Activated CD8-positive, alpha-beta T cell treated with anti-CD3 and anti-CD28 coated beads for 36 hours (primary cell): ENCODE measurements at regions of chr2 and their contacts with region 1.

Region 1: DNA sequence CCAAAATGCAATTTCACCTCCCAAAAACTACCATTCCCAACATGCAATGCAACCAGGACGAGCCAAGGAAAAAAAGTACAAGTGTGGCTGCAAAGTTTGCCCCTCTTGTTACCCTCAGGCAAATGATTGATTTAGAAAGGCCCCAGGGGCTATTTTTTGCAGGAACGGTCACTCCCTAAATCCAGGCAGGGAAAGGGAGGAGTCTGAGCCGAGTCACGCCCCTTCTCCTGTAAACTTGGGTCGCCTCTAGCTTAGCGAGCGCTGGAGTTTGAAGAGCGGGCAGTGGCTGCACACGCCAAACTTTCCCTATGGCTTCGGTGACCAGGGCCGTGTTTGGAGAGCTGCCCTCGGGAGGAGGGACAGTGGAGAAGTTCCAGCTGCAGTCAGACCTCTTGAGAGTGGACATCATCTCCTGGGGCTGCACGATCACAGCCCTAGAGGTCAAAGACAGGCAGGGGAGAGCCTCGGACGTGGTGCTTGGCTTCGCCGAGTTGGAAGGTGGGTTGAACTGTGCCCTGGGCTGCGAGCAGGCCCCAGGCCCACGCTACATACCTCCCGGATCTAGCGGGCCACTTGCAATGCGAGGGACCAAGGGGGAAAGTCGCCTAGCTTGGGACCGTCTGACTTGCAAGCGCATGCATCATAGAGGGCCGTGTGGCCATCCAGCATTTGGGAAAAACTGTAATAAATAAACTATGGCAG is at the start of gene GALM:
- DNase-seq: peak; percentile 74
- ATAC-seq: peak; percentile 37
- H3K4me3 Mint-ChIP-seq: peak within 1 kb of the TSS; percentile 79
- H3K27ac Mint-ChIP-seq: peak within 1 kb of the TSS; percentile 98
- H3K4me1 Mint-ChIP-seq: peaks cover 59% of the 10 kb centered on the region
- H3K27me3 Mint-ChIP-seq: no peaks in the 10 kb centered on the region
- CTCF ChIP-seq: no peak
- total RNA-seq, gene GALM: 38.3 to 40.6 TPM

Region 2: GRCh38 chr2:38554973-38555595 is 110.9 kb before region 1 on chr2:
- CTCF ChIA-PET with region 1: no interaction called
- POLR2A ChIA-PET with region 1: no interaction called
- intact Hi-C with region 1: no loop called
- DNase-seq: no peak
- ATAC-seq: no peak
- H3K4me3 Mint-ChIP-seq: no peak overlapping the region
- H3K27ac Mint-ChIP-seq: no peak overlapping the region
- H3K4me1 Mint-ChIP-seq: peaks cover 19% of the 10 kb centered on the region
- H3K27me3 Mint-ChIP-seq: no peaks in the 10 kb centered on the region
- CTCF ChIP-seq: peak; percentile 40

Region 3: GRCh38 chr2:38610851-38611801 is 54.9 kb before region 1 on chr2:
- CTCF ChIA-PET with region 1: interaction called, 89 read pairs
- POLR2A ChIA-PET with region 1: interaction called, 111 read pairs
- intact Hi-C with region 1: no loop called
- DNase-seq: peak; percentile 51
- ATAC-seq: peak; percentile 82
- H3K4me3 Mint-ChIP-seq: no peak overlapping the region
- H3K27ac Mint-ChIP-seq: peak overlapping the region; percentile 46
- H3K4me1 Mint-ChIP-seq: peaks cover 58% of the 10 kb centered on the region
- H3K27me3 Mint-ChIP-seq: no peaks in the 10 kb centered on the region
- CTCF ChIP-seq: no peak

Region 4: DNA sequence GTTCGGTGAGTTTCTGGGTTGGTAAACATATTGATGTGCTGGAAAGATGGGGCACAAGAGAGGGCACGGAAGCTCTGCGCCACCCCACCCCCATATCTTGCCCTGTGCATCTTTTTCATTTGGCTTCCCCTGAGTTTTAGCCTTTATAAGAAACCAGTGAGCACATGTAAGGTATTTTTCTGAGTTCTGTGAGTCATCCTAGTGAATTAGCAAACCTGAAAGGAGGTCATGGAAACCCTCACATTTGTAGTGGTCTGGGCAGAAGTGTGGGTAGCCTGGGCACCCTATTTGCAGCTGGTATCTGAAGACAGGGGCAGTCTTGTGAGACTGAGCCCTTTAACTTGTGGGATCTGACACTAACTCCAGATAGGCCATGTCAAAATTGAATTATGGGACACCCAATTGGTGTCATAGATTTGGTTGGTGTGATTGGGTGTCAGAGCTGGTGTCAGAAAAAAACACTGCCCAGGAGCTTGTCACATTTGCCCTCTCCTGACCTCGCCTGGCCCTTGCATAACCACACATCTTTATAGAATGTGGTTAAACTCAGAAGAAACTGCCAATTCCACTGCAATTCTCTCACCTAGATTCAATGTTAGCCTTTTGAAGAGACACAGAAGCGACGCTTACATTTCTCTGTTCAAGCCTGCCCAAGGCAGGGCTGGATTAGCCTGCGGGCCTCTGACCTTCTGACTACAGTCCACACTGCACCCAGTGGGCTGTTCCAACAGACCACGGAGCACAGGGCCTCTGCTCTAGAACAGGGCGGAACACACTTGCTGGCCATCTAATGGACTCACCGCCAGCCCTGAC is 12.1 kb before region 1 on chr2:
- CTCF ChIA-PET with region 1: interaction called, 48 read pairs
- POLR2A ChIA-PET with region 1: interaction called, 124 read pairs
- intact Hi-C with region 1: loop called (anchors 1 kb)
- DNase-seq: peak; percentile 93
- ATAC-seq: peak; percentile 83
- H3K4me3 Mint-ChIP-seq: peak overlapping the region; percentile 52
- H3K27ac Mint-ChIP-seq: peak overlapping the region; percentile 88
- H3K4me1 Mint-ChIP-seq: peaks cover 49% of the 10 kb centered on the region
- H3K27me3 Mint-ChIP-seq: no peaks in the 10 kb centered on the region
- CTCF ChIP-seq: no peak

Region 5: GRCh38 chr2:38709567-38710194 is 43.7 kb after region 1 on chr2:
- CTCF ChIA-PET with region 1: no interaction called
- POLR2A ChIA-PET with region 1: interaction called, 5 read pairs
- intact Hi-C with region 1: loop called (anchors 5 kb)
- DNase-seq: peak; percentile 69
- ATAC-seq: peak; percentile 78
- H3K4me3 Mint-ChIP-seq: peak overlapping the region; percentile 32
- H3K27ac Mint-ChIP-seq: peak overlapping the region; percentile 87
- H3K4me1 Mint-ChIP-seq: peaks cover 67% of the 10 kb centered on the region
- H3K27me3 Mint-ChIP-seq: no peaks in the 10 kb centered on the region
- CTCF ChIP-seq: no peak

Region 6: DNA sequence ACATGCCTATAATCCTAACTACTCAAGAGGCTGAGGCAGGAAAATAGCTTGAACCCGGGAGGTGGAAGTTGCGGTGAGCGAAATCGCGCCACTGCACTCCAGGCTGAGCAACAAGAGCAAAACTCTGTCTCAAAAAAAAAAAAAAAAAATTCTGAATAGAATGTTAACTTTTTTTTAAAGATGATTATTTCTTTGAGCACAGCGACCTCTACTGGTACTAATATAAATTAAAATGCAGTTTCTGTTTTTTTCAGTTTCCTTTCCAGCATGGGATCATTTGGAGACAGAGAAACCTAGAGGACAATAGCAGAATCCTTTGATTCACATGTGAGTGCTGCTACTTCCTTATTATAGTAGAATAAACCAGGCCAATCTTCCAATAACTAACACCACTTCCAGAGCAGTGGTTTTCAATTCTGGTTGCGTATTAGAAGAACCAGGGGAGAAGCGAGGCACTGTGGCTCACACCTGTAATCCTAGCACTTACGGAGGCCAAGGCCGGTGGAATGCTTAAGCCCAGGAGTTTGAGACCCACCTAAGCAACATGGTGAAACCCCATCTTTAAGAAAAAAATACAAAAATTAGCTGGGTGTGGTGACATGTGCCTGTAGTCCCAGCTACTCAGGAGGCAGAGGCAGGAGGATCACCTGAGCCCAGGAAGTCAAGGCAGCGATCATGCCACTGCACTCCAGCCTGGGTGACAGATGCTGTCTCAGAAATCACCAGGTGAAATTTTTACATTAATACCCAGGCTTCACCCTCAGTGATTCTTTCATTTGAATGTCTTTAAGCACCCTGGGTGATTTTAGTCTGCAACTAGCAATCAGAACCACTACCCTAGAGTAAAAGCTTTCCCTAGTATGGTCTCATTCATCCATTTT is 75.1 kb after region 1 on chr2:
- CTCF ChIA-PET with region 1: interaction called, 3 read pairs
- POLR2A ChIA-PET with region 1: interaction called, 15 read pairs
- intact Hi-C with region 1: no loop called
- DNase-seq: no peak
- ATAC-seq: no peak
- H3K4me3 Mint-ChIP-seq: no peak overlapping the region
- H3K27ac Mint-ChIP-seq: peak overlapping the region; percentile 28
- H3K4me1 Mint-ChIP-seq: peaks cover 46% of the 10 kb centered on the region
- H3K27me3 Mint-ChIP-seq: no peaks in the 10 kb centered on the region
- CTCF ChIP-seq: peak; percentile 87

Region 7: DNA sequence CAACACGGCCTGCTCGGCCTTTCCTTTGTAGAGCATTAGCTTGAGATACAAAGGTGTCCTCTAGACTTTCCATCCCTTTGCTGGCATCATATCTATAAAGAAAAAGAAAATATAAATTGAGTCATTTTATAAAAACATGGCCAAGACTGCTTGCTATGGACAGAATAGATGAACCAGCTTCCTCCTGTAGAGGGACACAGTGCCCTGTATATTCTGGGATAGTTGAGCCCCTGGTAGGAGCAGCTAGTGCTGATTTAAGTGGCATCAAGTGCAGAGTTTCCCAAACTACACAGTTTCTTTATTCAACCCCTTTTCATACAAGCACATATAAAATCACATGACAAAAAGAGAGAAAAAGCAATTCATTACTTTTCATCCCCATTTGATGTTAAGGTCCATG is 160.0 kb after region 1 on chr2:
- CTCF ChIA-PET with region 1: no interaction called
- POLR2A ChIA-PET with region 1: no interaction called
- intact Hi-C with region 1: no loop called
- DNase-seq: no peak
- ATAC-seq: no peak
- H3K4me3 Mint-ChIP-seq: no peak overlapping the region
- H3K27ac Mint-ChIP-seq: no peak overlapping the region
- H3K4me1 Mint-ChIP-seq: peaks cover 3% of the 10 kb centered on the region
- H3K27me3 Mint-ChIP-seq: no peaks in the 10 kb centered on the region
- CTCF ChIP-seq: no peak